Colonic mucosa (tissue), 4 donors: ENCODE measurements at regions of chr2 and their contacts with region 1.

Region 1: GRCh38 chr2:170361090-170361936 is 183.4 kb downstream of the MYO3B start:
- DNase-seq: peak; percentile 61
- H3K4me3 ChIP-seq: no peak overlapping the region
- H3K27ac ChIP-seq: no peak overlapping the region
- H3K4me1 ChIP-seq: no peaks in the 10 kb centered on the region
- H3K27me3 ChIP-seq: no peaks in the 10 kb centered on the region
- CTCF ChIP-seq: peak; percentile 62

Region 2: GRCh38 chr2:169590804-169591203 is 770.5 kb before region 1 on chr2:
- intact Hi-C with region 1: no loop called
- DNase-seq: no peak
- H3K4me3 ChIP-seq: no peak overlapping the region
- H3K27ac ChIP-seq: no peak overlapping the region
- H3K4me1 ChIP-seq: peaks cover 9% of the 10 kb centered on the region
- H3K27me3 ChIP-seq: no peaks in the 10 kb centered on the region
- CTCF ChIP-seq: no peak

Region 3: GRCh38 chr2:170235860-170236679 is 125.2 kb before region 1 on chr2:
- intact Hi-C with region 1: loop called (anchors 10 kb)
- DNase-seq: no peak
- H3K4me3 ChIP-seq: no peak overlapping the region
- H3K27ac ChIP-seq: no peak overlapping the region
- H3K4me1 ChIP-seq: no peaks in the 10 kb centered on the region
- H3K27me3 ChIP-seq: no peaks in the 10 kb centered on the region
- CTCF ChIP-seq: peak; percentile 38